SK-N-SH (cell line): ENCODE measurements at regions of chr15 and their contacts with region 1.

Region 1: GRCh38 chr15:80173022-80173759 is 20.4 kb downstream of the FAH start:
- DNase-seq: peak; percentile 79
- H3K4me3 ChIP-seq: no peak overlapping the region
- H3K27ac ChIP-seq: peak overlapping the region in 1 of 2 experiments; percentile 74; a peak in 1 of 4 replicates
- H3K4me1 ChIP-seq: peaks cover 0 to 14% of the 10 kb centered on the region in 2 experiments; a peak in 2 of 4 replicates
- H3K27me3 ChIP-seq: no peaks in the 10 kb centered on the region
- CTCF ChIP-seq: peak; percentile 74
- EP300 ChIP-seq: no peak
- RAD21 ChIP-seq: peak; percentile 87

Region 2: DNA sequence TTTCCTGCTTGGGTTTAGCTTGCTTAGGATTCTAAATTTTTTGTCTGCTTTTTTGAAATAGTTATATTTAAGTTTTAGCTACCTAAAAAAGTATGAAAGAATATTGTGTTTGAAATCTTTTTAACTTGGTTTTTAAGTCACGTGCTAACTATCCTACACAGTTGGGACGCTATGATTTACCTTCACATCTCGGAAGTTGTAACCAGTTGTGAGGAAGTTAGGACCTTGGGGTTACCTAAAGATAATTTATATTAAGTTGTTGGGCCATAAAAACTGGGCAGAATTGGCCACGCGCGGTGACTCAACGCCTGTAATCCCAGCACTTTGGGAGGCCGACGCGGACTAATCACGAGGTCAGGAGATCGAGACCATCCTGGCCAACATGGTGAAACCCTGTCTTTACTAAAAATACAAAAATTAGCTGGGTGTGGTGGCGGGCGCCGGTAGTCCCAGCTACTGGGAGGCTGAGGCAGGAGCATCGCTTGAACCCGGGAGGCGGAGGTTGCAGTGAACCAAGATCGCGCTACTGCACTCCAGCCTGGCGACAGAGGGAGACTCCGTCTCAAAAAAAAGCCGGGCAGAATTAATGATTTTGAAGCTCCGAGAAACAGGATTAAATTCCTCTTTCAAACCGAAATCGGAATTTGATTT is 112.7 kb before region 1 on chr15:
- CTCF ChIA-PET with region 1: interaction called, 11 read pairs
- POLR2A ChIA-PET with region 1: no interaction called
- DNase-seq: no peak
- H3K4me3 ChIP-seq: peak overlapping the region; percentile 81 to 92
- H3K27ac ChIP-seq: peak overlapping the region; percentile 67 to 78
- H3K4me1 ChIP-seq: peaks cover 0 to 7% of the 10 kb centered on the region in 2 experiments; a peak in 2 of 4 replicates
- H3K27me3 ChIP-seq: no peaks in the 10 kb centered on the region
- CTCF ChIP-seq: peak; percentile 39; the same call in 1 of the 2 replicates
- EP300 ChIP-seq: no peak
- RAD21 ChIP-seq: peak; percentile 35

Region 3: GRCh38 chr15:80160570-80161156 is 12.5 kb before region 1 on chr15:
- CTCF ChIA-PET with region 1: interaction called, 18 read pairs
- POLR2A ChIA-PET with region 1: no interaction called
- DNase-seq: no peak
- H3K4me3 ChIP-seq: no peak overlapping the region
- H3K27ac ChIP-seq: peak overlapping the region in 1 of 2 experiments; percentile 6; a peak in 3 of 4 replicates
- H3K4me1 ChIP-seq: no peaks in the 10 kb centered on the region; a peak in 1 of 4 replicates
- H3K27me3 ChIP-seq: no peaks in the 10 kb centered on the region
- CTCF ChIP-seq: no peak
- EP300 ChIP-seq: no peak
- RAD21 ChIP-seq: no peak

Region 4: GRCh38 chr15:80188251-80188650 is 15.1 kb after region 1 on chr15:
- CTCF ChIA-PET with region 1: interaction called, 11 read pairs
- POLR2A ChIA-PET with region 1: no interaction called
- DNase-seq: no peak
- H3K4me3 ChIP-seq: no peak overlapping the region
- H3K27ac ChIP-seq: no peak overlapping the region
- H3K4me1 ChIP-seq: no peaks in the 10 kb centered on the region
- H3K27me3 ChIP-seq: no peaks in the 10 kb centered on the region
- CTCF ChIP-seq: no peak
- EP300 ChIP-seq: no peak
- RAD21 ChIP-seq: no peak